Ovary (tissue), 10 donors: ENCODE measurements at regions of chr4 and their contacts with region 1.

Region 1: GRCh38 chr4:123396307-123397143 is at the start of gene SPRY1:
- DNase-seq: peak; percentile 63 to 85 (median 70)
- H3K4me3 ChIP-seq: peak within 1 kb of the TSS; percentile 62
- H3K27ac ChIP-seq: peak within 1 kb of the TSS; percentile 59 to 73
- H3K4me1 ChIP-seq: no peaks in the 10 kb centered on the region
- H3K27me3 ChIP-seq: no peaks in the 10 kb centered on the region
- CTCF ChIP-seq: no peak
- EP300 ChIP-seq: no peak
- POLR2A ChIP-seq: peak; percentile 40
- total RNA-seq, gene SPRY1: 22.5 to 124 (median 43.5) TPM

Region 2: DNA sequence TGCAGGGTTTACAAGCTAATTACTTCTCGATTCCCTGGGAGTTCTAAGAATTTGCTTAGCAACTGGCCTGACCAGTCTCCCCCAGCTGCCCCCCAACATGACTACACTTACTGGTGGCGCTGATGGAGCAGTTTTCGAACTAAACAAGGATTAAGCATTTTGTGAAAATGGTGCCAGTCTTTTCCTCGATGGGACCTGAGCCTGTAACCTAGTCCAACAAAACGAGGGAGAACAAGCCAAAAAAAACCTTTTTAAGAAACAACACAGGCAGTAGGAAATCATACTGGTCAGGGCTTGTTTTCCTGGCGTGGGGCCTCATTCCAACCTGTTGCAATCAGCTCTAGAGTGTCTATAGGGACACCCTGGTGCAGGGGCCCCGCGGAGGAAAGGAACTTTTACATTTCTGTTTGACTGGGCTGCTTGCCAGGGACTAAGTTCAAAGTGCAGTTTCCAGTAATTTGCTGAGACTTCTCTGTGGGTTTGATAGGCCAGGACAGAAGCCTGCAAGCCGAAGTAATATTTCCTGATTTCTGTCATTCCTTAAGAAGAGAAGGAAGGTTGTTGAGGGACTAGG is 158.8 kb after region 1 on chr4:
- intact Hi-C with region 1: loop called in 1 of 4 experiments (anchors 5 kb)
- DNase-seq: peak; percentile 50 to 88 (median 83)
- H3K4me3 ChIP-seq: no peak overlapping the region
- H3K27ac ChIP-seq: peak overlapping the region in 1 of 2 donors; percentile 34
- H3K4me1 ChIP-seq: peaks cover 11% of the 10 kb centered on the region
- H3K27me3 ChIP-seq: no peaks in the 10 kb centered on the region
- CTCF ChIP-seq: no peak
- EP300 ChIP-seq: no peak
- POLR2A ChIP-seq: no peak

Region 3: DNA sequence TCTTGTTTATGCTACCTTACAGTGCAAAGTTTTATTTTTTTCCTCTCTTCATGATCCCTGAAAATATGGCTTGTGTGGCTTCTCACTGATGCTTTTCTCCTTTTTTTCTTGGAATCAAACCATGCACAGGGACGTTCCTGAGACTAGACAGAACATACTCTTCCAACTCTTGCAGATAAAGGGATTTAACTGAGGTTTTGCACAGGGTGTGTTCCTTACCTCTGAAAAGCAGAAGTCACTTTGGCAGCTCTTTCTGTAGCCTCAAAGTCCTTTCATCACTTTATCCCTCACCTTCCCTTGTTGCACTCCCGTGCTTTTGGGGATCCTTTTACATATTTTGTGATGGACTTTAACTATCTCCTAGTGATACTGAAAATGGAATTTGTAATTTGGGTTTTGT is 300.2 kb after region 1 on chr4:
- intact Hi-C with region 1: no loop called
- DNase-seq: no peak
- H3K4me3 ChIP-seq: no peak overlapping the region
- H3K27ac ChIP-seq: no peak overlapping the region
- H3K4me1 ChIP-seq: peaks cover 1% of the 10 kb centered on the region
- H3K27me3 ChIP-seq: no peaks in the 10 kb centered on the region
- CTCF ChIP-seq: no peak
- EP300 ChIP-seq: no peak
- POLR2A ChIP-seq: no peak

Region 4: DNA sequence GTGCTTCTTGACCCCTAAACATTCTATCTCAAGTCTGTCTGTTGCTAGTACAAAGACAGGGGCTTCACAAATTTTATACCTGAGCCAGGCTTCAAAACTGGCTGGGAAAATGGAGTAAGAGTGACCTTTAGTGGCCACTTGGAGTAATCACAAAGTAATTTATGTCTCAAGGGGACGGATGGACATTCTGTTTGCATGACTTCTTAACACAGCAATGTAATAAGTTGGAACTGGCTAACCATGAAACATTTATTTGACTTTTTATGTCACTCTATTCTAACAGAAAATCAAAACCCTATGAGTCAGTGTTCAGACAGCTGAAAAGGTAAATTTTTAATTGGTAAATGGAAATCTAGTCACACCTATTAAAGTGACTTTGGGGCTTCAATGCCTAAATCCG is 715.4 kb after region 1 on chr4:
- intact Hi-C with region 1: loop called in 2 of 4 experiments (anchors 5 kb)
- DNase-seq: peak in 1 of 5 donors; percentile 30
- H3K4me3 ChIP-seq: no peak overlapping the region
- H3K27ac ChIP-seq: no peak overlapping the region
- H3K4me1 ChIP-seq: no peaks in the 10 kb centered on the region
- H3K27me3 ChIP-seq: no peaks in the 10 kb centered on the region
- CTCF ChIP-seq: peak in 2 of 3 donors; percentile 68 to 80
- EP300 ChIP-seq: no peak
- POLR2A ChIP-seq: no peak